ENCODE measurements at regions of chr5 and their contacts with region 1.

Region 1: DNA sequence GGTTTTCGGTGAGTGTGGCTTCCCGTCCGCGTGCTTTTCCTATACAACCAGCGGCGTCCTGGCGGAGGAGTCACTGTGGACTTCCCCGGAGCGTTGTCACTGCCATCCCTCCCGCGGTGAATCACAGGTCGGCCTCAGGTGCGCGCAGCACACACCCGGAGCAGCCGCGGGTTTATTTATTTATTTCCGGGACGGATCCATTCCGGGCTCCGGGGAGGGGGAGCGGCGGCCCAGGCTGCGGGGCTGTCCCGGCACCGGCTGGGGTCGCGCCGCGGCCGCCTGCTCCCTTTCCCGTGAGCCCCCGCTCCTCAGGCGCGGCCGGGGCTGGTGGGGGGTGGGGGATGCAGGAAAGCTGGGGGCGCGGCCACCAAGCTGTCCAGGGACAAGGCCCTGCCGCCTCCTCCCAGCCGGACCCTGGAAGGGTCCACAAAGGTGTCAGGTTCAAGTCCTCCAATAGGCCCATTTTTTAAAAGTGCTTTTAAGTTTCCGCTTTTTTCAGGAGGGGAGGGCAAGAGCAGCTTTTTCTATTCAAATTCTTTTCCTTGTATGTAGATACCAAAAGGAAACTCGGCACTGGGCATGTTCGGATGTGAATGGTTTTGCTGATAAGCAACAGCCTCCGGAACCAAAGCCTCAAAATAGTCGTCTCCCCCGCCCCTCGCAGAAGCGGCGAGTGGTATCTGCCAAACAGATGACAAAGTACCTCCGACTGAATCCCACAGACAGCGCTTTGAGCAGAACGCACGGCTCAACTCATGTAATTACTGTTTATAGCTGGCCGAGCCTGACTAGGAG is 192.5 kb downstream of the CD180 start:
- DNase-seq: peak; percentile 89 to 91
- H3K4me3 ChIP-seq: peak overlapping the region; percentile 63 to 67
- H3K27ac ChIP-seq: peak overlapping the region; percentile 86 to 89
- H3K4me1 ChIP-seq: peaks cover 0 to 55% (median 15%) of the 10 kb centered on the region in 4 donors
- H3K27me3 ChIP-seq: no peaks in the 10 kb centered on the region
- CTCF ChIP-seq: no peak

Region 2: GRCh38 chr5:66915531-66915930 is 88.6 kb before region 1 on chr5:
- intact Hi-C with region 1: no loop called
- DNase-seq: no peak
- H3K4me3 ChIP-seq: no peak overlapping the region
- H3K27ac ChIP-seq: no peak overlapping the region
- H3K4me1 ChIP-seq: no peaks in the 10 kb centered on the region
- H3K27me3 ChIP-seq: no peaks in the 10 kb centered on the region
- CTCF ChIP-seq: no peak

Region 3: DNA sequence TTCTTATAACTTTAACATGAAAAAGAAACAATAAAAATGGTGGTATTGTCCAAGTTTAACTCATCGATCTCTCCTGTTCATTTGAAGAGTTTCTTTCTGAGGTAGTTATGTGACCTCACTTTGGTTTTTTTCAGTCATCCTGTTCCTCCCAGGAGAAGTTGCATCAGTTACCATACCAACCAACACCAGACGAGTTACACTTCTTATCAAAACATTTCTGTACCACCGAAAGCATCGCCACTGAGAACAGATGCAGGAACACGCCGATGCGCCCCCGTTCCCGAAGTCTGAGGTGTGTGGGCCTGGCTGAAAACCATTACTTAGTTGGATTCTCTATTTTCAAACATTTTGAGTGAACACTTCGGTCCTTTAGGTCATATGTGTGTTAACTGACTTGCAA is 96.2 kb after region 1 on chr5:
- intact Hi-C with region 1: loop called (anchors 10 kb)
- DNase-seq: no peak
- H3K4me3 ChIP-seq: no peak overlapping the region
- H3K27ac ChIP-seq: no peak overlapping the region
- H3K4me1 ChIP-seq: peaks cover 0 to 17% (median 3%) of the 10 kb centered on the region in 4 donors
- H3K27me3 ChIP-seq: no peaks in the 10 kb centered on the region
- CTCF ChIP-seq: no peak

Measured in tibial artery (tissue), 4 donors.